Activated naive CD8-positive, alpha-beta T cell treated with anti-CD3 and anti-CD28 coated beads, Interleukin-2, amount 10 ng/mL, durations not matched to agents 7 days and 5 days (primary cell): ENCODE measurements at regions of chr11 and their contacts with region 1.

Region 1: DNA sequence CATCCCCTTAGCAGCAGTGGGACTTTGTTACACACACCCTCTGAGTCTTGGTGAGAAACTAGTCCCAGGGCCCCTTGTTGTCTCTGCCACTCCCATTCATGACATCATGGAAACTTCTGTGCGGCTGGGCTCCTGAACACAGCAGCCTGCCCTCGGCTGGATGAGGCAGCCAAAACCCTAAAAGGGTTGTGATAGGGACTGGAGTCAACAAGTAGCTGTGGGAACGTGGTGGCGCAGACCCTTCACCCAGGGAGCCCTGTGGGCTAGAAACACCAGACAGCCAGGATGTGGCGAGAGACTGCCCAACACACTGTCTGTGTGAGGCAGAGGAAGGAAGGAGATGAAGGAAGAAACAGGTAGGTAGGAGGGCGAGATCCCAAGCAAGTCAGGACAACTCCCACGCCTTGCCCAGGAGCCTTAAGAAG is 3.9 kb downstream of the CD3D start:
- DNase-seq: peak; percentile 85
- ATAC-seq: peak; percentile 65
- H3K4me3 Mint-ChIP-seq: peak overlapping the region; percentile 89
- H3K27ac Mint-ChIP-seq: peak overlapping the region; percentile 97
- H3K4me1 Mint-ChIP-seq: peaks cover 56% of the 10 kb centered on the region
- H3K27me3 Mint-ChIP-seq: no peaks in the 10 kb centered on the region

Region 2: DNA sequence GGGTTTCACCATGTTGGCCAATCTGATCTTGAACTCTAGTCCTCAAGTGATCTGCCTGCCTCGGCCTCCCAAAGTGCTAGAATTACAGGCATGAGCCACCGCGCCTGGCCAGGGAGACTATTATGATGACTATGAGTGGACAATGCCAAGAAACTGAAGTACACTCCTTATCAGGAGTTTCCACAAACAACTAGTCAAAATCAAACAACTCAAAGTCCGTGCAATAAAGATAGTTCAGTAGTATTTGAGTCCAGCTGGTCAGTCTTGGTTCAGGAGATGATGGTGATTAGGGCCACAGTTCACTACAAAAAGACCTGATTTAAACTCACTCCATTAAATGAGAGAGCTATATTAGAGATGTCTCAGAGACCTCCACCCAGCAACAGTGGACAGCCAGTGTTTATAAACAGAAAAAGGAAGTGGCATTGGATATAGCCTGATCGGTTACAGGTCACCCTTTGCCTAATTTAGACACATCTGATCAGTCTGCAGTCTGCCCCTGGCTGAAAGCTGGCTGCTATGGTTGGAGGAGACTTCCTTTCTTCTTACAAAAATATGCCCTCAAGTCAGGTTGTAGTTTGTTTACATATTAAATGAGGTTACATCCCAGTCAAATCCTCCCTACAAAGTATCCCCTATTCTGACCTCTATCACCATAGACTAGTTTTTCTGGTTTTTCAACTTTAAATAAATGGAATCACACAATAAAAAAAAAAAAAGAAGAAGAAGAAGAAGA is 17.1 kb before region 1 on chr11:
- POLR2A ChIA-PET with region 1: interaction called, 14 read pairs
- DNase-seq: no peak
- ATAC-seq: no peak
- H3K4me3 Mint-ChIP-seq: no peak overlapping the region
- H3K27ac Mint-ChIP-seq: no peak overlapping the region
- H3K4me1 Mint-ChIP-seq: peaks cover 41% of the 10 kb centered on the region
- H3K27me3 Mint-ChIP-seq: no peaks in the 10 kb centered on the region

Region 3: GRCh38 chr11:118353084-118353710 is 14.5 kb after region 1 on chr11:
- POLR2A ChIA-PET with region 1: interaction called, 11 read pairs
- DNase-seq: no peak
- ATAC-seq: no peak
- H3K4me3 Mint-ChIP-seq: no peak overlapping the region
- H3K27ac Mint-ChIP-seq: peak overlapping the region; percentile 68
- H3K4me1 Mint-ChIP-seq: peaks cover 23% of the 10 kb centered on the region
- H3K27me3 Mint-ChIP-seq: no peaks in the 10 kb centered on the region

Region 4: DNA sequence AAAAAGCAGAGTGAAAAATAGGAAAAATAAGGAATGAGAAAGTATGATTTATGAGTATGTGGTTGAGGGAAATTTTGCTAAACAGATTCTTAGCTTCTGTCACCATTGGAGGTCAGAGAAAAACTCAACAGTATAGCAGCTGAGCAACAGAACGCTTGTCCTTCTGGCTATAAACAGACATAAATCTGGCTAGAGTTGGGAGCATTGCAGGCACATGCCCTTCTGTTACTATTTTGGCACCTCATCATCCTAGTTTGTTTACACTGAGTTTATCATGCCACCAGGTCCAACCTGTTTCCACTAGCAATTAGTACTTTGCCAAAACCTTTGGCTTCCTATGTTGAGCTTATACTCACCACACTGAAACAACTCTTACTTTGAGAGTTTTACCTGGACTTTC is 27.6 kb after region 1 on chr11:
- POLR2A ChIA-PET with region 1: no interaction called
- DNase-seq: no peak
- ATAC-seq: no peak
- H3K4me3 Mint-ChIP-seq: no peak overlapping the region
- H3K27ac Mint-ChIP-seq: no peak overlapping the region
- H3K4me1 Mint-ChIP-seq: peaks cover 19% of the 10 kb centered on the region
- H3K27me3 Mint-ChIP-seq: no peaks in the 10 kb centered on the region